ENCODE measurements at regions of chr3 and their contacts with region 1.

Region 1: GRCh38 chr3:32276279-32276847 is 37.9 kb downstream of the CMTM8 start:
- DNase-seq: no peak
- ATAC-seq: no peak
- H3K4me3 Mint-ChIP-seq: no peak overlapping the region
- H3K27ac Mint-ChIP-seq: no peak overlapping the region
- H3K4me1 Mint-ChIP-seq: peaks cover 11% of the 10 kb centered on the region
- H3K27me3 Mint-ChIP-seq: no peaks in the 10 kb centered on the region

Region 2: DNA sequence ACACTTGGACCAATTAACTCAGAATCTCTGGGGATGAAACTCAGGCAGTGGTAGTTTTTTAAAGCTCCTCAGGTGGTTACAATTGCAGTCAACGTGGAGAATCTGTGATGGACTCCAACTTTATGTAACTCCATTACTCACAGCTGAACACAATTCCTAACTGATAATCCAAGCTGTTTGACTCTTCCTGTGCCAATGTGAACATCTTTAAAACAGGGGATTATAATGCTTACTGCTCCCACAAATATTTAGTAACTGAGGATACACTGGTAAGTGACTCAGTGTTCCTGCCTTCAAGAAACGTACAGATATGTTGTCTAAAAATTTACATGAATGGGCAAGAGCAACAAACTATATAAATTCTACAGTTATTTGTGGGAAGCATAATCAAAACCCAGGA is 380.9 kb before region 1 on chr3:
- CTCF ChIA-PET with region 1: no interaction called
- POLR2A ChIA-PET with region 1: no interaction called
- intact Hi-C with region 1: no loop called
- DNase-seq: no peak
- ATAC-seq: no peak
- H3K4me3 Mint-ChIP-seq: no peak overlapping the region
- H3K27ac Mint-ChIP-seq: no peak overlapping the region
- H3K4me1 Mint-ChIP-seq: peaks cover 12% of the 10 kb centered on the region
- H3K27me3 Mint-ChIP-seq: peaks cover 5% of the 10 kb centered on the region

Region 3: GRCh38 chr3:32257639-32258038 is 18.7 kb before region 1 on chr3:
- CTCF ChIA-PET with region 1: interaction called, 5 read pairs
- POLR2A ChIA-PET with region 1: no interaction called
- intact Hi-C with region 1: loop called in 1 of 2 experiments (anchors 2 kb)
- DNase-seq: no peak
- ATAC-seq: no peak
- H3K4me3 Mint-ChIP-seq: no peak overlapping the region
- H3K27ac Mint-ChIP-seq: no peak overlapping the region
- H3K4me1 Mint-ChIP-seq: peaks cover 16% of the 10 kb centered on the region
- H3K27me3 Mint-ChIP-seq: no peaks in the 10 kb centered on the region

Region 4: GRCh38 chr3:32313723-32314473 is 37.5 kb after region 1 on chr3:
- CTCF ChIA-PET with region 1: no interaction called
- POLR2A ChIA-PET with region 1: no interaction called
- intact Hi-C with region 1: no loop called
- DNase-seq: peak; percentile 54
- ATAC-seq: peak; percentile 97
- H3K4me3 Mint-ChIP-seq: peak overlapping the region; percentile 62
- H3K27ac Mint-ChIP-seq: peak overlapping the region; percentile 70
- H3K4me1 Mint-ChIP-seq: peaks cover 24% of the 10 kb centered on the region
- H3K27me3 Mint-ChIP-seq: no peaks in the 10 kb centered on the region